Caco-2 (cell line): ENCODE measurements at regions of chr3 and their contacts with region 1.

Region 1: GRCh38 chr3:16516695-16517481 is 3.4 kb upstream of the RFTN1 start:
- DNase-seq: peak in 1 of 2 experiments; percentile 58
- H3K4me3 ChIP-seq: no peak overlapping the region
- H3K4me3 Mint-ChIP-seq: no peak overlapping the region
- H3K27ac Mint-ChIP-seq: no peak overlapping the region
- H3K4me1 ChIP-seq: peaks cover 7% of the 10 kb centered on the region; the same call in 1 of the 2 replicates
- H3K4me1 Mint-ChIP-seq: no peaks in the 10 kb centered on the region
- H3K27me3 ChIP-seq: no peaks in the 10 kb centered on the region
- H3K27me3 Mint-ChIP-seq: peaks cover 6% of the 10 kb centered on the region
- CTCF ChIP-seq: peak; percentile 53 to 68

Region 2: GRCh38 chr3:16290007-16290826 is 226.7 kb before region 1 on chr3:
- CTCF ChIA-PET with region 1: interaction called, 17 read pairs
- POLR2A ChIA-PET with region 1: no interaction called
- intact Hi-C with region 1: loop called (anchors 1 kb)
- DNase-seq: peak in 1 of 2 experiments; percentile 50
- H3K4me3 ChIP-seq: no peak overlapping the region
- H3K4me3 Mint-ChIP-seq: no peak overlapping the region
- H3K27ac Mint-ChIP-seq: no peak overlapping the region
- H3K4me1 ChIP-seq: peaks cover 6% of the 10 kb centered on the region; the same call in 1 of the 2 replicates
- H3K4me1 Mint-ChIP-seq: peaks cover 10% of the 10 kb centered on the region
- H3K27me3 ChIP-seq: no peaks in the 10 kb centered on the region
- H3K27me3 Mint-ChIP-seq: no peaks in the 10 kb centered on the region
- CTCF ChIP-seq: peak; percentile 73 to 77

Region 3: DNA sequence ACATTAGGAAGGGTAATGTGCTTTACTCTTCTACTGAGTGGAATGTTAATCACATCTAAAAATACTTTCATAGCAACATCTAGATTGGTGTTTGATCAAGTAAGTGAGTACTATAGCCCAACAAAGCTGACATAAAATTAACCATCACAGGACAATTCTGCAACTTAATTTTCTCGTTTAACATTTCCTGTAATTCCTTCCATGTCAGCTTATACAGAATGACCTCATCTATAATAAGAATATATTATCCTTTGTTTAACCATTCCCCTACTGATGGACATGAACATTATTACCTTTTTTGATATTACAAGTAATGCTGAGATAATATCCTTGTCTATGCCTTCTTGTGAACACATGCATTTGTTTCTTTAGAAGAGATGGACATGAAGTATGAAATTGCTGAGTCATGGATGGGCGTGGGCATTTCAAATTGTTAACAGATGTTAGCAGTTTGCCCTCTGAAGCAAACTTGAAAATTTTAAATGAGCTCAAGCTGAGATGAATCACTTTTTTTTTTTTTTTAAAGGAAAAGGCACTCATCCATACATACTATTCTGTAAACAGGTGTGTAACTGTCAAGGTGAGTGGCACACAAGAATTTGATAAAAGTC is 166.8 kb before region 1 on chr3:
- CTCF ChIA-PET with region 1: no interaction called
- POLR2A ChIA-PET with region 1: no interaction called
- intact Hi-C with region 1: no loop called
- DNase-seq: no peak
- H3K4me3 ChIP-seq: no peak overlapping the region
- H3K4me3 Mint-ChIP-seq: no peak overlapping the region
- H3K27ac Mint-ChIP-seq: no peak overlapping the region
- H3K4me1 ChIP-seq: no peaks in the 10 kb centered on the region
- H3K4me1 Mint-ChIP-seq: no peaks in the 10 kb centered on the region
- H3K27me3 ChIP-seq: no peaks in the 10 kb centered on the region
- H3K27me3 Mint-ChIP-seq: no peaks in the 10 kb centered on the region
- CTCF ChIP-seq: no peak

Region 4: DNA sequence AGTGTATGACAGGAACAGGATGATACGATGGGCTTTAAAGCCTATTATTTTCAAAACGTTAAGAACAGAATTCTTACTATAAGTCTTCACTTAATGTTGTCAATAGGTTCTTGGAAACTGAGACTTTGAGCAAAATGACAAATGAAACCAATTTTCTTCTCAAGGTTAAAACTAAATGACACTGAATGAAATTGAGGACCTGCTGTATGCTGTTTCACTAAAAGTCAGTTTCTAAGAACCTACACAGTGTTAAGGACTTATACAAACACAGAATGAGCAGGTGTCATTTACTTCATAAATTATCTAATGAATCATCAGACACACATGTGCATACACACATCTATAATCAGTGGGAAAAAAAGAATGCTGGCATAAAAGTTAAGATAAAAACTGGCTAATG is 110.3 kb before region 1 on chr3:
- CTCF ChIA-PET with region 1: no interaction called
- POLR2A ChIA-PET with region 1: no interaction called
- intact Hi-C with region 1: loop called (anchors 5 kb)
- DNase-seq: no peak
- H3K4me3 ChIP-seq: no peak overlapping the region
- H3K4me3 Mint-ChIP-seq: no peak overlapping the region
- H3K27ac Mint-ChIP-seq: no peak overlapping the region
- H3K4me1 ChIP-seq: no peaks in the 10 kb centered on the region
- H3K4me1 Mint-ChIP-seq: no peaks in the 10 kb centered on the region
- H3K27me3 ChIP-seq: no peaks in the 10 kb centered on the region
- H3K27me3 Mint-ChIP-seq: no peaks in the 10 kb centered on the region
- CTCF ChIP-seq: no peak